B cell (primary cell): ENCODE measurements at regions of chr16 and their contacts with region 1.

Region 1: DNA sequence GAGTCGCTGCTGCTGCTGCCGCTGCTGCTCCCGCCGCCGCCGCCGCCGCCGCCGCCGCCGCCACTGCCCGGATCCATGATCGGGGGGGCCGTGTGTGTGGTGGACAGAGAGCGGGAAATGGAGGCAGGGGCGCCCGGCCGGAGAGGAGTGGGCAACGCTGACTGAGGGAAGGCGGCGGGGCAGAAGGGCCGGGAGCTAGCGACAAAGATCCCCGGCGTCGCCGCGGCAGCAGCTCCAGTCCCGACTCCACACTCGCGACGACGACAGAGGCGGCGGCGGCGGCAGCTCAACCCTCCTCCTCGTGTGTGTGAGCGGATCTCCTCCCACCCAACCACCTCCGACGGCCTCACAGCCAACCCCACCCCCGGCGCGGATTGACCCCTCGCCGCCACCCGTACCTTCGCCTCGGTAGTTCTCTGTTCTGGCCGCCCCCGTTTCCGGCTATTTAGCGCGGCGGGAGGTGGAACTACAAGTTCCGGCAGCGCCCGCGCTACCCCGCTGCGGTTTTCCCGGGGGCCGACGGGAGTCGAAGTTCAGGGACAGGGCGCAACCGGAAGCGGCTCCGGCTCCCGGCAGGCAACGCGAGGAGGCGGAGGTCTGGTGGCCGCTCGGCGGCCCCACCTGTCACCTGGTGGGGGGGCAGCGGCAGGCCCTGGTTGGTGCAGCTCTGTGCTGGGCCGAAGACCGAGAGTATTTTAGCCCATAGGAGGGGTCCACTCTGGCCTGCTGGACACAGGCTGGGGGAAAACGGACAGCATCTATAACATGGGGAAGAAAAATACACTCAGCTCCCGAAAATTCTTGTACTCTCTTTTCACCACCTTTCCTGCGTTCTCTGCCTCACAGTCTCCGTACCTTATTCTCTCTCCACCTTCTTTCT is at the start of gene GSPT1:
- DNase-seq: peak; percentile 99
- ATAC-seq: peak; percentile 93
- H3K4me3 ChIP-seq: peak within 1 kb of the TSS; percentile 65 to 78 (median 76)
- H3K4me3 Mint-ChIP-seq: peak within 1 kb of the TSS; percentile 91
- H3K27ac ChIP-seq: peak within 1 kb of the TSS; percentile 72 to 82
- H3K27ac Mint-ChIP-seq: peak within 1 kb of the TSS; percentile 95
- H3K4me1 ChIP-seq: peaks cover 29 to 31% of the 10 kb centered on the region in 2 donors
- H3K4me1 Mint-ChIP-seq: peaks cover 32% of the 10 kb centered on the region
- H3K27me3 ChIP-seq: peaks cover 0 to 4% (median 0%) of the 10 kb centered on the region in 4 experiments
- H3K27me3 Mint-ChIP-seq: peaks cover 11% of the 10 kb centered on the region
- CTCF ChIP-seq: no peak
- total RNA-seq, gene GSPT1: 72.6 and 77.0 TPM in 2 replicates

Region 2: DNA sequence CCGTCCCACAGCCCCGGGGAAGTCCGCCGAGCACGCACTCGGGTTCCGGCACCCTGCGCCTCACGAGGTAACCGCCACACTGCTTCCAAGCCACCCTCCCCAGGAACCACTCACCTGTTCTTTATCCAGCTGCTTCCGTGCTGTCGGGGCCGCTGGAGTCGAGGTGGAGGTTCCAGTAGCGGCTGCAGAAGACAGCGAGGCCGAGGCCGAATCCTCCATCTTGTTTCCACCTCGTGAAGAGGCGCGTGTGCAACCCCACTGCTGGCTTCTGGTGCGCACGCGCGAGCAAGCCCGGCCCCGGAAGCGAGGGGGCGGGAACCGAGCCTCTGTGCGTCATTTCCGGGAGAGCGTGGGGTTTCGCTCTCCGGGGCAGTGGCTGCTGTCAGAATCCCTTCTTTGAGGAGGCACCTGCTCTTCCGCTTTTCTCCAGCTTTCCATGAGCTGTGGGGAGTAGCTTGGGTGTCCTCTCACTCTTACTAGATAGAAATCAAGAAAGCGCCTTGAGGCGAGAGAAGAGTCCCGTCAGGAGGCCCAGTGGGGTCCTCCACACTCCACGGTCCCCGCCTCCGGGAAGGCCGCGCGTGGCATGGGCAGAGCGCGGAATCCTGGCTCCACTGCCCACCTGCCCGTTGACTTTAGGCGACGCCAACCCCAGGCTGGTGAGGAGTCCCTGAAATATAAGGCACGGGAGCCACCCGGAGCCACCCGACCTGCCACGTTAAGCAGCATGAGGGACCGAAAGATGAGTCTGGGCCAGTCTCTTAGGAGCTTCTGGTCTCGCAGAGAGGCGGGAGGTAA is 64.4 kb before region 1 on chr16 and contains the start of gene RSL1D1:
- CTCF ChIA-PET with region 1: interaction called, 3 read pairs
- POLR2A ChIA-PET with region 1: no interaction called
- intact Hi-C with region 1: loop called (anchors 1 kb)
- DNase-seq: peak; percentile 98
- ATAC-seq: peak; percentile 88
- H3K4me3 ChIP-seq: peak within 1 kb of the TSS; percentile 73 to 97 (median 91)
- H3K4me3 Mint-ChIP-seq: peak within 1 kb of the TSS; percentile 97
- H3K27ac ChIP-seq: peak within 1 kb of the TSS; percentile 81 to 94
- H3K27ac Mint-ChIP-seq: peak within 1 kb of the TSS; percentile 97
- H3K4me1 ChIP-seq: peaks cover 18 to 27% of the 10 kb centered on the region in 2 donors
- H3K4me1 Mint-ChIP-seq: peaks cover 40% of the 10 kb centered on the region
- H3K27me3 ChIP-seq: no peaks in the 10 kb centered on the region
- H3K27me3 Mint-ChIP-seq: no peaks in the 10 kb centered on the region
- CTCF ChIP-seq: no peak
- total RNA-seq, gene RSL1D1: 146 and 167 TPM in 2 replicates

Region 3: DNA sequence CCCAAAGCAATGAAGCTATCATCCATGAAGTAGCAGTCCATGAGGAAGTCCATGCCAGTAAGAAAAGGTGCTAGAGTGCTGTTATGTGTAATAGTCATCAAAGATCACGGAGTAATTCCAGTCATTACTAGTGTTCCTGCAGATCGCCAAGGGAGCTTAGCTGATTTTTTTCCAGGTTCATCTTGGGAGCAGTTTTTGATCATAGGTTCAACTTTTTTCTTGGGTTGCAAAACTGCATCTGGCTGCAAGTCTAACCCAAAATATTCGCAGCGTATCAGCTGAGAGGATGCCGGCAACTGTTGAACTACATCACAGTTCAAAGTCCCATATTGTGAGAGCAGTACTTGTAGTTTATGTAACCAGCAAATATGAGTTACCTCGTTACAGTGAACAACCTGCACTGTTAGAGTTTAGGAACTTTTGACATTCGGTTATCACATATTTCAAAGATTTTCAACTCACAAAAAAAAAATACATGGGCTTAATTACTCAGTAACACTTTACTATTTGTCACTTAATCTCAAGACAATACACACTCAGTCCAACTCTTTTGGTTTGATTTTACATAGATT is 46.1 kb before region 1 on chr16:
- CTCF ChIA-PET with region 1: no interaction called
- POLR2A ChIA-PET with region 1: interaction called, 11 read pairs
- intact Hi-C with region 1: no loop called
- DNase-seq: no peak
- ATAC-seq: no peak
- H3K4me3 ChIP-seq: no peak overlapping the region
- H3K4me3 Mint-ChIP-seq: no peak overlapping the region
- H3K27ac ChIP-seq: no peak overlapping the region
- H3K27ac Mint-ChIP-seq: no peak overlapping the region
- H3K4me1 ChIP-seq: no peaks in the 10 kb centered on the region
- H3K4me1 Mint-ChIP-seq: peaks cover 12% of the 10 kb centered on the region
- H3K27me3 ChIP-seq: no peaks in the 10 kb centered on the region
- H3K27me3 Mint-ChIP-seq: no peaks in the 10 kb centered on the region
- CTCF ChIP-seq: no peak

Region 4: DNA sequence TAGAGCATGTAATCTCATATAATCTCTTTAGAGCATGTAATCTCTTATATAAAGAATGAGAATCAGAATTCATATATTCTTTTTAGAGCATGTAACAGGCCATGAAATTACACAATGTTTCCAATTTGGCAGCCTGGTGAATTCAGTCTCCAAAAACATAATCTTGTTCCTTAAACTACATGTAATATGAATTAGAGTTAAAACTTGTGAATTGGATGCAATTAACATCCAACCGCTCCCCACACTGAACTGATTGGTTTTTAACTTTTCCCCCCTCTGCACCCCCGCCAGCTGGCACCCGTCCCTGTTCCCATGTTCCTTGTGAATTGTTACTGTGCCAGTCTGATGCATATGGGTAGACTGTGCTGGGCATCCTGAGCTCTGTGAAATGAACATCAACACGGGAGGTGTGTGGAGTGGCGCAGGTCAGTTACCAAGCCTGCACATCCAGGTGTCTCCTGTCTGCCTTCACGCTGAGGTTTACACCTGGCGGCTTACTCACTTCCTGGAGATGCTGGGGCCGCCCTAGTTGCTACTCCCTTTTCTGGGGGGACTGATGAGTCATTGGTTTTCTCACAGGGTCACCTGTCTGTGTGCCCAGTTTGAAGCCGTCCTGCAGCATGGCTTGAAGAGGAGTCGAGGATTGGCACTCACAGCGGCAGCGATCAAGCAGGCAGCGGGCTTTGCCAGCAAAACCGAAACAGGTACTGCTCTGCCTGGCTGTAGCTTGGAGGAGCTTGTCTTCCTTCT is 111.0 kb after region 1 on chr16:
- CTCF ChIA-PET with region 1: no interaction called
- POLR2A ChIA-PET with region 1: no interaction called
- intact Hi-C with region 1: no loop called
- DNase-seq: peak; percentile 33
- ATAC-seq: peak; percentile 39
- H3K4me3 ChIP-seq: no peak overlapping the region
- H3K4me3 Mint-ChIP-seq: no peak overlapping the region
- H3K27ac ChIP-seq: peak overlapping the region; percentile 16 to 59
- H3K27ac Mint-ChIP-seq: peak overlapping the region; percentile 70
- H3K4me1 ChIP-seq: peaks cover 44 to 58% of the 10 kb centered on the region in 2 donors
- H3K4me1 Mint-ChIP-seq: peaks cover 64% of the 10 kb centered on the region
- H3K27me3 ChIP-seq: no peaks in the 10 kb centered on the region
- H3K27me3 Mint-ChIP-seq: no peaks in the 10 kb centered on the region
- CTCF ChIP-seq: no peak

Region 5: DNA sequence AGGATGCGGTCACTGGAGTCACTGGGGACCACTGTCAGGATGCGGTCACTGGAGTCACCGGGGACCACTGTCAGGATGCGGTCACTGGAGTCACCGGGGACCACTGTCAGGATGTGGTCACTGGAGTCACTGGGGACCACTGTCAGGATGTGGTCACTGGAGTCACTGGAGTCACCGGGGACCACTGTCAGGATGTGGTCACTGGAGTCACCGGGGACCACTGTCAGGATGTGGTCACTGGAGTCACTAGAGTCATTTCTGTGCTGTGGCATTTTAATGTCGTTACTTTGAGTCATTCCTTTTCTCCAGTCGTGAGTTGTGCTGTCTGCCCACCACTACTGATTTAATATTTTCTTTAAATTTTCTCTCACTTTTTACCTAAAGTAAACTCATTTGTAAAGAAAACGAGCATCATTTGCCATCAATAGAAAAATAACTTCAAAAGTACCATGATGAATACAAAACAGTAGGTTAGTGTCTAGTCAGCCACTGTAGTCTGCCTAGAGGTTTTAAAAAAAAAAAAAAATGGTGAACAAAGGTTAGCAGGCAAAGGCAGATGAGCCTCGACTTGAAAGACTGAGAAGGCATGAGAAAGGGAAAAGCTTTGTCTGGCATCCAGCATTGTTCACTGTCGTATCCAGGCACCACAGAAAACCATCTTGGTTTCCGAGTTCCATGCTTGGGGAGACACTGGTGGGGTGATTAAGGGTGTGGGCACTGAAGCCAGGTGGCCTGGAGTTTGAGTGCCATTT is 407.3 kb after region 1 on chr16:
- CTCF ChIA-PET with region 1: no interaction called
- POLR2A ChIA-PET with region 1: no interaction called
- intact Hi-C with region 1: no loop called
- DNase-seq: peak; percentile 70
- ATAC-seq: peak; percentile 55
- H3K4me3 ChIP-seq: no peak overlapping the region
- H3K4me3 Mint-ChIP-seq: no peak overlapping the region
- H3K27ac ChIP-seq: peak overlapping the region; percentile 66 to 78
- H3K27ac Mint-ChIP-seq: peak overlapping the region; percentile 46
- H3K4me1 ChIP-seq: peaks cover 23 to 44% of the 10 kb centered on the region in 2 donors
- H3K4me1 Mint-ChIP-seq: peaks cover 61% of the 10 kb centered on the region
- H3K27me3 ChIP-seq: no peaks in the 10 kb centered on the region
- H3K27me3 Mint-ChIP-seq: no peaks in the 10 kb centered on the region
- CTCF ChIP-seq: no peak